Endothelial cell of umbilical vein (primary cell): ENCODE measurements at regions of chr7 and their contacts with region 1.

Region 1: GRCh38 chr7:142853739-142854371 is 1.0 kb upstream of the EPHB6 start:
- DNase-seq: peak; percentile 77
- H3K4me3 ChIP-seq: peak overlapping the region; percentile 48 to 73 (median 65)
- H3K27ac ChIP-seq: no peak overlapping the region
- H3K4me1 ChIP-seq: peaks cover 3% of the 10 kb centered on the region
- H3K27me3 ChIP-seq: peaks cover 7 to 10% of the 10 kb centered on the region in 2 experiments
- CTCF ChIP-seq: peak; percentile 67 to 87
- POLR2A ChIP-seq: no peak

Region 2: GRCh38 chr7:142438235-142438922 is 415.5 kb before region 1 on chr7:
- CTCF ChIA-PET with region 1: no interaction called
- POLR2A ChIA-PET with region 1: no interaction called
- dilution Hi-C with region 1: no loop called
- intact Hi-C with region 1: no loop called
- DNase-seq: peak; percentile 38
- H3K4me3 ChIP-seq: no peak overlapping the region
- H3K27ac ChIP-seq: no peak overlapping the region
- H3K4me1 ChIP-seq: peaks cover 27% of the 10 kb centered on the region
- H3K27me3 ChIP-seq: no peaks in the 10 kb centered on the region
- CTCF ChIP-seq: peak; percentile 81 to 98
- POLR2A ChIP-seq: no peak

Region 3: DNA sequence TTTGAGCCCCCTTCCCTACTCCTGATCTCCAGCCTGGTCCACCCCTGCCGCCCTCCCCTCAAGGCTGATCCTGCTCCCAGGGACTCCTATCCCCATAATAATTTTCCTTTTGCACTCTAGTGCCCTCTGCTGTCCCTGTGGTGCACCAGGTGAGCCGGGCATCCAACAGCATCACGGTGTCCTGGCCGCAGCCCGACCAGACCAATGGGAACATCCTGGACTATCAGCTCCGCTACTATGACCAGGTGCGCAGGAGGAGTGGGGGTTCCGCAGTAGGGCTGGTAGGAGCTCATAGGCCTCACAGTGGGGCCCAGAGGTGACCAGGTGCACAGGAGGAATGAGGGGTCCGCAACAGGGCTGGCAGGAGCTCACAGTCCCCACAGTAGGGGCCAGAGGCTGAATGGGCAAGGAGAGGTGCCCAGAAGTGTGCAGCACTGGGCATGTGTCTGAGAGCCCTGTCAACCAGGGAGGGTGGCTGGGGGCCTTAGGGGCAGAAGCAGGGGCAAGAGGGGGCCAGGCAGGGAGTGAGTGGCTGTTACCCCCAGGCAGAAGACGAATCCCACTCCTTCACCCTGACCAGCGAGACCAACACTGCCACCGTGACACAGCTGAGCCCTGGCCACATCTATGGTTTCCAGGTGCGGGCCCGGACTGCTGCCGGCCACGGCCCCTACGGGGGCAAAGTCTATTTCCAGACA is 12.7 kb after region 1 on chr7:
- CTCF ChIA-PET with region 1: interaction called, 32 read pairs
- POLR2A ChIA-PET with region 1: no interaction called
- dilution Hi-C with region 1: no loop called
- intact Hi-C with region 1: loop called (anchors 1 kb)
- DNase-seq: peak; percentile 29
- H3K4me3 ChIP-seq: no peak overlapping the region
- H3K27ac ChIP-seq: no peak overlapping the region
- H3K4me1 ChIP-seq: no peaks in the 10 kb centered on the region
- H3K27me3 ChIP-seq: no peaks in the 10 kb centered on the region
- CTCF ChIP-seq: peak; percentile 39 to 64
- POLR2A ChIP-seq: no peak

Region 4: GRCh38 chr7:143126140-143126539 is 272.3 kb after region 1 on chr7:
- CTCF ChIA-PET with region 1: no interaction called
- POLR2A ChIA-PET with region 1: no interaction called
- dilution Hi-C with region 1: no loop called
- intact Hi-C with region 1: no loop called
- DNase-seq: peak; percentile 19
- H3K4me3 ChIP-seq: no peak overlapping the region
- H3K27ac ChIP-seq: no peak overlapping the region
- H3K4me1 ChIP-seq: no peaks in the 10 kb centered on the region
- H3K27me3 ChIP-seq: no peaks in the 10 kb centered on the region
- CTCF ChIP-seq: no peak
- POLR2A ChIP-seq: no peak